Psoas muscle (tissue), 8 donors: ENCODE measurements at regions of chr2 and their contacts with region 1.

Region 1: DNA sequence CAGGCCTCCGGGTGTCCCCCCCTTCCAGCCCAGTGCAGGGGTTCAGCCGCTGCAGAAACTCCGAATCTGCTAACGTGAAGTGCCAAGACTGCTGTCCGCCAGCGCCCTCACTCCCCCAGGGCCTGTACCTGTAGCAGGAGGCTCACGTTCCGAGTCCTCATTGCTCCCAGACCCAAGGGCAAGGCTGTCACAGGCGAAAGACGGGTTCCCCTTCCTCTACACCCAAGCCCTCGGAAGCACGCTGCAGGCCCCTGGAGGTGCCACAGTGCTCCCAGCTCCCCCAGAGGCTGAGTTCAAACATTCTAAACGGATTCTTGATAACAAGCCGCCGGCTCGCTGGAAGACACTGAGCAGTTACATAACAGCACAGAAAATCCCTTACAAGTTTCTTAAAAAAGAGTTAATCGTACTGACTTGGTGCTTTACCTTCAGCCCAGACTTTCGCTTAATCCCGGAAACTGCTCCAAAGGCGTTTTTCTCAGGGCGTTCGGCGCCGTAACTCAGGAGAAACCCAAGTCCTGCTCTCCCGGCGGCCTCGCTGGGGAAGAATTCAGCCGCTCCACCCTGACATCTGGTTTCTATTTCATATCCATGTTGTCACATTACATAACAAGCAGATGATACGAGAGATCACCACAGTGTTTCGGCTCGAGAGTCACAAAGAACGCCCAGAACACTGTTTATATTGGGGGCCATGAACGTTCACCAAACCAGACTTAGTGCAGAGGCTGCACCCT is 92.0 kb downstream of the HDAC4 start:
- DNase-seq: peak; percentile 61 to 78
- ATAC-seq: peak; percentile 5 to 31 (median 12)
- H3K4me3 ChIP-seq: peak overlapping the region; percentile 95
- H3K27ac ChIP-seq: peak overlapping the region; percentile 97
- H3K4me1 ChIP-seq: peaks cover 46% of the 10 kb centered on the region
- H3K27me3 ChIP-seq: no peaks in the 10 kb centered on the region
- CTCF ChIP-seq: no peak

Region 2: DNA sequence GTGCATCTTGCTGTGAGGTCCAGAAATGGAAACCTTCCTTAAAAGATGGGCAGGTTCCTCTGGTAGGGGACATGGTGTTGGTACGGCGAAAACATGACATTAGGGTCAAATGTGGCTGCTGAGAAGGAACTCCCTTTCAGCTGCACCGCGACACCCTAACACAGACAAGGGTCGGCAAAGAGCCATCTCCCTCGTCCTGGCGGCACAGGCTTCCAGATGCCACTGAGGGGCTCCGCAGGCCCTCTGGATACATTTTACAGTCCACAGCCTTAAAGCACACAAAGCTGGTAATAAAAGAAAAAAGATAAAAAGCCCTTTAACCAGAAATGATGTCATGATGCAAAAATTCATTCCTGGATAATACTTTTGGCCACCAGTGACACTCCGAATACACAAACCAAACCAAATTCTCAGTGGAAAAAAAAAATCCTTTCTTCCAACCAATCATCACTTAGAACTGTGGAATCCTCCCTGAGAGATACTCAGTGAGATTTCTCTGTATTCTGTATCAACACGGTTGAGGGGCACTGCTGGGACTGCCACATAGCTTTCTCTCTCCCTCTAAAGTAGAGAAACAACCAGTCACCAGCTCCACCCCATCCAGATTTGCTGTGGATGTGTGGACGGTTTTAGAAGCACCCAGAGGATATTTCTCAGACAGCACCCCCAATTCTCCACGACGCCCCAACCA is 82.8 kb before region 1 on chr2:
- intact Hi-C with region 1: loop called in 1 of 2 experiments (anchors 5 kb)
- DNase-seq: peak in 1 of 2 donors; percentile 54
- ATAC-seq: no peak
- H3K4me3 ChIP-seq: no peak overlapping the region
- H3K27ac ChIP-seq: peak overlapping the region; percentile 88
- H3K4me1 ChIP-seq: peaks cover 98% of the 10 kb centered on the region
- H3K27me3 ChIP-seq: no peaks in the 10 kb centered on the region
- CTCF ChIP-seq: no peak

Region 3: GRCh38 chr2:239236043-239236807 is 72.6 kb before region 1 on chr2:
- intact Hi-C with region 1: no loop called
- DNase-seq: no peak
- ATAC-seq: no peak
- H3K4me3 ChIP-seq: no peak overlapping the region
- H3K27ac ChIP-seq: peak overlapping the region; percentile 83
- H3K4me1 ChIP-seq: peaks cover 84% of the 10 kb centered on the region
- H3K27me3 ChIP-seq: no peaks in the 10 kb centered on the region
- CTCF ChIP-seq: no peak

Region 4: GRCh38 chr2:239249776-239250175 is 59.1 kb before region 1 on chr2:
- intact Hi-C with region 1: loop called in 1 of 2 experiments (anchors 5 kb)
- DNase-seq: peak; percentile 81 to 86
- ATAC-seq: peak; percentile 17 to 38 (median 34)
- H3K4me3 ChIP-seq: no peak overlapping the region
- H3K27ac ChIP-seq: peak overlapping the region; percentile 86
- H3K4me1 ChIP-seq: peaks cover 90% of the 10 kb centered on the region
- H3K27me3 ChIP-seq: no peaks in the 10 kb centered on the region
- CTCF ChIP-seq: no peak

Region 5: GRCh38 chr2:239275847-239276831 is 32.7 kb before region 1 on chr2:
- intact Hi-C with region 1: loop called in 1 of 2 experiments (anchors 2 kb)
- DNase-seq: peak; percentile 87 to 94
- ATAC-seq: peak; percentile 69 to 75 (median 70)
- H3K4me3 ChIP-seq: peak overlapping the region; percentile 63
- H3K27ac ChIP-seq: peak overlapping the region; percentile 93
- H3K4me1 ChIP-seq: peaks cover 89% of the 10 kb centered on the region
- H3K27me3 ChIP-seq: no peaks in the 10 kb centered on the region
- CTCF ChIP-seq: no peak

Region 6: DNA sequence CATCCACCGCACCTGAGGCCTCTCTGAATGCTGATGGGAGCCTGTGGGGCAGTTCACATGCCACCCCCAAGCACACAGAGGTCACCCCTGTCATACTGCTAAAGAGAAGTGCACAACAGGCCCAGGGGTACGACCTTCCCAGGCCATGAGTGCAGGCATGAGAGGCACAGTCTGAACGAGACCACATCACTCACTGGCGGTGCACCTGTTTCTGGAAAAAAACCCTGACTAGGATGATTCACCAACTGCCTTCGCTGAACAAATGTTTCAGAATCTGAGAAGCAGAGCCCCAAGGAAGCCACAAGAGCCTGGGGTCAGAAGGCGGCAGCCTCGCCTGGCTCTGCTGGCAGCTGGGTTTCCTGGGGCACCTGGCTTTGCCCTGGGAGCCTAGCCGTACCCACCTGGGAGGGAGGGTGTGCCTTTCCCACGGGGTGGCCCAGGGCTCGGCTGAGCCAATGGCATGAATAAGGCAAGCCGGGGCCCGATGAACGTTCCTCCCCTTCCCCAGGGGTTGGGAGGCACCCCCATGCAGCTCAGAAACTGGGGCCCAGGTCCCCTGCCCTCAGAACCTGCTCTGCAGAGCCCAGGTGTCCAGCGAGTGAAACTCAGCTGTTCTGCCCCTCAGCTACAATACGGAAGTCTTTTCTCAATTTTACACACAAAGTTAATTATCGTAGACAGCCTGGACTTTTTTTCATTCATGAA is 18.2 kb after region 1 on chr2:
- intact Hi-C with region 1: loop called in 1 of 2 experiments (anchors 2 kb)
- DNase-seq: peak; percentile 56 to 80
- ATAC-seq: peak; percentile 44 to 58 (median 53)
- H3K4me3 ChIP-seq: no peak overlapping the region
- H3K27ac ChIP-seq: peak overlapping the region; percentile 96
- H3K4me1 ChIP-seq: peaks cover 55% of the 10 kb centered on the region
- H3K27me3 ChIP-seq: no peaks in the 10 kb centered on the region
- CTCF ChIP-seq: no peak

Region 7: GRCh38 chr2:239361311-239361642 is 52.4 kb after region 1 on chr2:
- intact Hi-C with region 1: no loop called
- DNase-seq: no peak
- ATAC-seq: no peak
- H3K4me3 ChIP-seq: no peak overlapping the region
- H3K27ac ChIP-seq: no peak overlapping the region
- H3K4me1 ChIP-seq: peaks cover 17% of the 10 kb centered on the region
- H3K27me3 ChIP-seq: no peaks in the 10 kb centered on the region
- CTCF ChIP-seq: no peak

Region 8: DNA sequence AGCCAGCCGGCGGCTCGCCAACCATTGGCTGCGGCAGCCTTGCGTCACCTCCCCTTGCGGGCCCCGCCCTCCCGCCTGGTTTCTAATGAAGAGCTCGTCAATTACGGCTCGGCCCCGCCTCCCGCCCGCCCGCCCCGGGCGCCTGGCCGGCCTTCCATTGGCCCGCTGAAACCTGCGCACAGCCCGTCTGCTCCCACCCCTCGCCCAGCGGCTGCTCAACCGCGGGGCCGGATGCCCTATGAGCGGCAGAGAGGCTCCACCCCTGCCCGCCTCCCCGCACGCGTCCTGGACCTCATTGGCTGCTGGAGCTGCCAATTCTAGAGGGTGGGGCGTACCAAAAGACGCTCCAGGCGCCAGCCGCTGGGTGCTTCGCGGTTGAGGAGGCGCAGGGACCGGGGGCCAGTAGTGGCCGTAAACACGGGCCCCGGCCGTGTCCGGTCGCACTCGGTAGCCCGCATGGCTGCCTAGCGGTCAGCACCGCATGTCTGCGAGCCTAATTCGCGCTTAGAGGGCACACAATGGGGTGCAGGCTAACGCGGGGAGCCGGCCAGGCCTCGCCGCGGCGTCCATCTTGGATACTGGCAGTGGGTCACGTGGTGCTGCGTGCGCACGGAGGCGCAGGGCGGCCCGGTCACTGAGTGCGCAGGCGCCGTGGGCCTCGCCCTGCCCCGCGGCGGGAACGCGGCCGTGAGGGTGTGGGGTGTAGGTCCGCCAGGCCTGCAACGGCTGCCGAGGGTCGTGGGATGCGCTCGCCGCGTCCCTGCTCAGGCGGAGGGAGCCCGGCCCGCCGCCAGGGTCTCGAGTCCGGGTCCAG is 92.4 kb after region 1 on chr2:
- intact Hi-C with region 1: loop called (anchors 1 to 5 kb)
- DNase-seq: peak; percentile 99 to 100
- ATAC-seq: peak; percentile 90 to 95 (median 93)
- H3K4me3 ChIP-seq: peak overlapping the region; percentile 79
- H3K27ac ChIP-seq: peak overlapping the region; percentile 100
- H3K4me1 ChIP-seq: peaks cover 28% of the 10 kb centered on the region
- H3K27me3 ChIP-seq: no peaks in the 10 kb centered on the region
- CTCF ChIP-seq: no peak

Region 9: DNA sequence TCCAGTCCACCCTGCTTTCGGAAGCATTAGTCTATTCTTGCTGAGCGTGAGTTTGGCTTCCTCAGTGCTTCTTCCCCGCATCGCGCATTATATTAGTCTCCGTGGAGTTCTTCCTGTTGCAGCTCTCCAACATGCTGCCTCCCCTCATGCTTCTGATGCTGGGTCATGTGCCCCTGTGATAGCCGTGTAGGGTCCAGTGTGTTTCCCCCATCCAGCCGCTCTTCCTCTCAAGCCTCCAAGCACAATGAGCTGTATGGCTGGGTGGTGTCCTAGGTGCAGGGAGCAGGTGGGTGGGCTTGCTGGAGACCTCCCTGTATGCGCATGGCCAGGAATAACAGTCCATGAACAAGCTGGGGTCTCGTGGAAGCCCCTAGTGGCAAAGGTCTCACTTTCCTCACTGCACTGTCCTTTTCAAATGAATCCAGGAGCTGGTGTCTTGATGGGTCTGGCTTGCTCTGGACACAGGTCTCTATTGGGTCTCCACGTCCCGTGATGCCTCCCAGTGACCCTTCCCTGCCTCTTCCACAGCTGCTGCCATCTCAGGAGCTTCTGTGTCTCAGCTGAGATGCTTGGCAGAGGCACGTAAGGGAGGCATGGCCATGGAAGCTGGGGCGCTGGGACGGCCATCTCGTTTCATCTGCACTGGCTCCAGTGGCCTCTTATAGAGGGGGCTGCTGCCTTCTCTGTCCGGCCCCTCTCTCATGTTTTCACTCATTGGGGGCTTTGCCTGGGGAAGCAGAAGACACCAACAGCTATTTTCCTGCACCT is 146.8 kb after region 1 on chr2:
- intact Hi-C with region 1: no loop called
- DNase-seq: no peak
- ATAC-seq: no peak
- H3K4me3 ChIP-seq: no peak overlapping the region
- H3K27ac ChIP-seq: no peak overlapping the region
- H3K4me1 ChIP-seq: no peaks in the 10 kb centered on the region
- H3K27me3 ChIP-seq: no peaks in the 10 kb centered on the region
- CTCF ChIP-seq: no peak